CD4-positive, alpha-beta T cell (primary cell): ENCODE measurements at regions of chr15 and their contacts with region 1.

Region 1: DNA sequence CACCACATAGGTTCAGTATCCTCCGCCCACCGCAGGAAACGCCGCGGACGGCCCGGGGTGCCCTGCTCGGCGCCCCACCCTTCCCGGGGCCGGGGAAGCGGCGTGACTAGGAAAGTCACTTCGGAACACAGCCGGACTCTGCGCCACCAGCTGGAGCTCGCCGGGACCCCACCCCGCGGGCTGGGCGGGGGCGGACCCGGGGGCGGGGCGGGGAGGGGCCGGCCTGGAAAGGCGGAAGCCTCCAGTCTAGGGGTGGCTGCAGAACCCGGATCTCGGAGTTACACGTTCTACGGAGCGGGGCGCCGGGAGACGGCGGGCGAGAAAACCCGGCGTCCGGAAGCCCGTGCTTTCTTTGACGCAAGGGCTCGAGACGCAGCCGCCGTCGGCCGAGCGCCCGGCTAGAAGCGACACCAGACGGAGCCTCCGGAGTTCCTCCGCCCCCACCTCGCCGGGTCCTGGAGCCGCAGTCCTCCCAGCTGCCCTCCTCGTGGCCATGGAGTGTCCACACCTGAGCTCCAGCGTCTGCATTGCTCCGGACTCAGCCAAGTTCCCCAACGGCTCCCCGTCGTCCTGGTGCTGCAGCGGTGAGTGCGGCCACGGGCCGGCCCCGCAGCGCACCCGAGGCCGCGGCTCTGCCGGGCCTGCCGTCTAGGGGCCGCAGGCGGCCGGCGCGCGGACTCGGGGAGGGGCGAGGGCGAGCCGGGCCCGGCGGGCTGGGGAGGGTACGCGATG is at the start of gene USP3:
- DNase-seq: peak; percentile 88 to 96 (median 93)
- ATAC-seq: peak; percentile 67
- H3K4me3 ChIP-seq: peak within 1 kb of the TSS; percentile 93
- H3K4me3 Mint-ChIP-seq: peak within 1 kb of the TSS; percentile 96
- H3K27ac ChIP-seq: peak within 1 kb of the TSS; percentile 97 to 99
- H3K27ac Mint-ChIP-seq: peak within 1 kb of the TSS; percentile 92
- H3K4me1 ChIP-seq: peaks cover 58% of the 10 kb centered on the region
- H3K4me1 Mint-ChIP-seq: peaks cover 77% of the 10 kb centered on the region
- H3K27me3 ChIP-seq: no peaks in the 10 kb centered on the region
- H3K27me3 Mint-ChIP-seq: no peaks in the 10 kb centered on the region
- CTCF ChIP-seq: peak; percentile 36
- total RNA-seq, gene USP3: 280 to 282 TPM

Region 2: DNA sequence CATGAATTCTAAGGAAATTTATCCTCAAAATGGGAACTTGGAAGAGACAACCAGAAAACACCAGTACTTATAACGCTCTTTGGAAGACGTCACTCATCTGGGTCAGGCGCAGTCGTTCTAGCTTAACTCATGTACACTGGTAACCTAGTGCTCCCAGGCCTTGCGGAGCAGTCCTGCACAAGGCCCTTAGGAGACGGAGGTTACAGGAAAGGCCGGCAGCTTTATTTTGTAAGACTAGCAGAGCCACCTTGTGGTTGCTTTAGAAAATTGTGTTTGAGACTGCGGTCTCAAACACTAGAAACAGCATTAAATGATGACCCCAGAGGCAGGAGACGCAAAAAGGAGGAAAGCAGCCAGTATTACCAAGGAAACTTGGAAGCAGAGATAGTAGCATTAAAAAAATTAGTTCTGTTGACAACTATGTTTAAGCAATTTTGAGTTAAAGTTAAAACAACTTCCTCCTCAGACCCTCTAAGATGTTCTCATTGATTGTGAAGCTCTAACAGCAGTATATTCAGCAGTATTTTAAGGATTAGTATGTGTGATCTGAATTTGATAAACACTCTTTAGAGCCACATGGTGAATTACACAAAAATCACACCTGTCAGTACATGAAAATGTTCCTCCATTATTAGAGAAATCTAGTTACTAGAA is 1197.4 kb before region 1 on chr15:
- CTCF ChIA-PET with region 1: no interaction called
- POLR2A ChIA-PET with region 1: no interaction called
- intact Hi-C with region 1: no loop called
- DNase-seq: peak in 2 of 14 experiments; percentile 1
- ATAC-seq: no peak
- H3K4me3 ChIP-seq: no peak overlapping the region
- H3K4me3 Mint-ChIP-seq: no peak overlapping the region
- H3K27ac ChIP-seq: no peak overlapping the region
- H3K27ac Mint-ChIP-seq: no peak overlapping the region
- H3K4me1 ChIP-seq: no peaks in the 10 kb centered on the region
- H3K4me1 Mint-ChIP-seq: no peaks in the 10 kb centered on the region
- H3K27me3 ChIP-seq: peaks cover 5 to 10% of the 10 kb centered on the region in 2 experiments
- H3K27me3 Mint-ChIP-seq: peaks cover 40% of the 10 kb centered on the region
- CTCF ChIP-seq: peak; percentile 48

Region 3: DNA sequence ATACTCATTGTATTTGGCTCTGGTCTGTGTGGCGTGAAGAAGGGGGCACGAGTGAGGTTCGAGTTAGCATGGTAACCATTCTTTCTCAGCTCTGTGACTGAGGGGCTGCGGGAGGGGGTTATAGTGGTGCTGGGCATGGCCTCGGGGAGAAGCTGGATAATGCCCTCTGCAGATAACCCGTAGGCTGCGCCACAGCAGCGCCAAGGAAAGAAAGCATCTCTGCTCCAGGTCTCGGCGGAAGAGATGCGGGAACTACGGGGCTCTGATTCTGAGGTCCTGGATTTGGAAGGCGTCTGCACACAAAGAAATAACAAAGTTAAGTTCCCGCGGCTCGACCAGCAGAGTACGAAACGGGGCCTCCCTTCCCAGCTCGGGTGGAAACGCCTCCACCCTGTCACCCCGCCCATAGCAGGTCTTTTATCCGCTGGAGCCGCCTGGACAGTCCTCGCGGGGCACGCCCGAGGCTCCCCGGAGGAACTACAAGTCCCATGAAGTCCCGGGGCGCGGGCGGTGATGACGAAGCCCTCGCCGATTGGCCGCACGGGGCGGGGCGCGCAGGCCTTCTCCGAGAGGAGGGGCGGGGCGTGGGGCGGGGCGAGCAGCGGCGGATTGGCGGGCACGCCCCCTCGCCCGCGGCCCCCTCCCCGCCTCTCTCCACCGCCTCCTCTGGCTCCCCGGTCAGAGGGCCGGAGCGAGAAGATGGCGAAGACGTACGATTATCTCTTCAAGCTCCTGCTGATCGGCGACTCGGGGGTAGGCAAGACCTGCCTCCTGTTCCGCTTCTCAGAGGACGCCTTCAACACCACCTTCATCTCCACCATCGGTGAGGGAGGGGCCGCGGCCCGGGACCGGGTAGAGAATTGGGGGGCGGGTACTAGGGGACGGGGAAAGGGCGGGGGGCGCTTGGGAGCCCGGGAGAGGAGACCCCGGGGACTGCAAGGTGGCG is 315.2 kb before region 1 on chr15 and contains the start of gene RAB8B:
- CTCF ChIA-PET with region 1: no interaction called
- POLR2A ChIA-PET with region 1: interaction called, 6 read pairs
- intact Hi-C with region 1: loop called in 1 of 2 experiments (anchors 10 kb)
- DNase-seq: peak; percentile 94 to 99 (median 97)
- ATAC-seq: peak; percentile 69
- H3K4me3 ChIP-seq: peak within 1 kb of the TSS; percentile 88
- H3K4me3 Mint-ChIP-seq: peak within 1 kb of the TSS; percentile 96
- H3K27ac ChIP-seq: peak within 1 kb of the TSS; percentile 94 to 95
- H3K27ac Mint-ChIP-seq: peak within 1 kb of the TSS; percentile 95
- H3K4me1 ChIP-seq: peaks cover 28% of the 10 kb centered on the region
- H3K4me1 Mint-ChIP-seq: peaks cover 54% of the 10 kb centered on the region
- H3K27me3 ChIP-seq: no peaks in the 10 kb centered on the region
- H3K27me3 Mint-ChIP-seq: no peaks in the 10 kb centered on the region
- CTCF ChIP-seq: no peak
- total RNA-seq, gene RAB8B: 74.5 to 75.2 TPM

Region 4: GRCh38 chr15:63481105-63481810 is 23.2 kb before region 1 on chr15:
- CTCF ChIA-PET with region 1: interaction called, 24 read pairs
- POLR2A ChIA-PET with region 1: interaction called, 367 read pairs
- intact Hi-C with region 1: loop called (anchors 1 kb)
- DNase-seq: peak in 2 of 14 experiments; percentile 61 to 69
- ATAC-seq: no peak
- H3K4me3 ChIP-seq: no peak overlapping the region
- H3K4me3 Mint-ChIP-seq: peak overlapping the region; percentile 26
- H3K27ac ChIP-seq: peak overlapping the region; percentile 71 to 91
- H3K27ac Mint-ChIP-seq: peak overlapping the region; percentile 95
- H3K4me1 ChIP-seq: peaks cover 89% of the 10 kb centered on the region
- H3K4me1 Mint-ChIP-seq: peaks cover 81% of the 10 kb centered on the region
- H3K27me3 ChIP-seq: no peaks in the 10 kb centered on the region
- H3K27me3 Mint-ChIP-seq: no peaks in the 10 kb centered on the region
- CTCF ChIP-seq: no peak

Region 5: DNA sequence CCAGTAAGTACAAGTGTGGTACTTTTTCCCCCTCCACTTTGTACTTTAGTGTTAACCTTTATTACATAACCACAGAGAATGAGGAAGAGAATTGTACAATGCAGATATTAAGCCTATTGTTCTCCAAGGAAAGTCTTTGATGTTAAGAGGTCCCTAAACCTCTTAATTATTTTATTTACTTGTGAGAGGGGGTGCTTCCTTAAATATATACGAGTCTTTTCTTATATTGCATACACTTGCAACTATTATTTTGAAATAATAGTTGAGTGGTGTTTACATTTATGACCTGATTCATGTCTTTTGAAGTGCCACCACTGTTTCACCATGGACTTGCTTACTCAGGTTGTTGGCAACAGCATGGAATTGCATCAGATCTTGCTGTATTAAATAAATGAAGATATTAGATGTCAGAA is 10.1 kb after region 1 on chr15:
- CTCF ChIA-PET with region 1: interaction called, 18 read pairs
- POLR2A ChIA-PET with region 1: interaction called, 32 read pairs
- intact Hi-C with region 1: no loop called
- DNase-seq: peak in 1 of 14 experiments; percentile 52
- ATAC-seq: peak; percentile 19
- H3K4me3 ChIP-seq: no peak overlapping the region
- H3K4me3 Mint-ChIP-seq: peak overlapping the region; percentile 44
- H3K27ac ChIP-seq: peak overlapping the region in 1 of 2 donors; percentile 10
- H3K27ac Mint-ChIP-seq: peak overlapping the region; percentile 48
- H3K4me1 ChIP-seq: peaks cover 40% of the 10 kb centered on the region
- H3K4me1 Mint-ChIP-seq: peaks cover 99% of the 10 kb centered on the region
- H3K27me3 ChIP-seq: no peaks in the 10 kb centered on the region
- H3K27me3 Mint-ChIP-seq: no peaks in the 10 kb centered on the region
- CTCF ChIP-seq: no peak

Region 6: DNA sequence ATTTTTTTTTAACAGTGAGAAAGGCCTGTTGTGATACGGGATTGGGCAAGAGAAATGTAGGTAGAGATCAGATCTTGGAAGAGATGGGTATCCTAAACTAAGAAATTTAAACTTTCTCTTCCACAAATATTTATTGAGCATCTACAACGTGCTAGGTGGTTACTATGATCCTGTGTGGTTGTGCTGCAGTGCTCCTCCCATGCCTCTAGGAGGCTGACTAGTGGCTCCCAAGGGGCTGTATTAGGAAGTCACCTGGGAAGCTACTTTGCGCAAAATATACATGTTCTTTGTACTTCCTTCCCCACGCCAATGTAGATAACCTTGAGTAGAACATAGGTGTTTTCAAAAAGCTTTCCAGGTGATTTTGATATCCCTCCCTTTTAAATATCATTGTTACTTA is 27.2 kb after region 1 on chr15:
- CTCF ChIA-PET with region 1: interaction called, 4 read pairs
- POLR2A ChIA-PET with region 1: interaction called, 23 read pairs
- intact Hi-C with region 1: no loop called
- DNase-seq: peak in 2 of 14 experiments; percentile 28 to 38
- ATAC-seq: peak; percentile 51
- H3K4me3 ChIP-seq: no peak overlapping the region
- H3K4me3 Mint-ChIP-seq: peak overlapping the region; percentile 2
- H3K27ac ChIP-seq: no peak overlapping the region
- H3K27ac Mint-ChIP-seq: no peak overlapping the region
- H3K4me1 ChIP-seq: peaks cover 35% of the 10 kb centered on the region
- H3K4me1 Mint-ChIP-seq: peaks cover 92% of the 10 kb centered on the region
- H3K27me3 ChIP-seq: no peaks in the 10 kb centered on the region
- H3K27me3 Mint-ChIP-seq: no peaks in the 10 kb centered on the region
- CTCF ChIP-seq: peak; percentile 21

Region 7: GRCh38 chr15:63553388-63553791 is 49.0 kb after region 1 on chr15:
- CTCF ChIA-PET with region 1: interaction called, 3 read pairs
- POLR2A ChIA-PET with region 1: interaction called, 21 read pairs
- intact Hi-C with region 1: loop called in 1 of 2 experiments (anchors 5 kb)
- DNase-seq: peak in 1 of 14 experiments; percentile 27
- ATAC-seq: peak; percentile 51
- H3K4me3 ChIP-seq: no peak overlapping the region
- H3K4me3 Mint-ChIP-seq: no peak overlapping the region
- H3K27ac ChIP-seq: no peak overlapping the region
- H3K27ac Mint-ChIP-seq: peak overlapping the region; percentile 67
- H3K4me1 ChIP-seq: no peaks in the 10 kb centered on the region
- H3K4me1 Mint-ChIP-seq: peaks cover 68% of the 10 kb centered on the region
- H3K27me3 ChIP-seq: no peaks in the 10 kb centered on the region
- H3K27me3 Mint-ChIP-seq: no peaks in the 10 kb centered on the region
- CTCF ChIP-seq: no peak

Region 8: GRCh38 chr15:64093627-64094417 is 589.4 kb after region 1 on chr15 and contains the start of gene CIAO2A:
- CTCF ChIA-PET with region 1: no interaction called
- POLR2A ChIA-PET with region 1: interaction called, 9 read pairs
- intact Hi-C with region 1: loop called in 1 of 2 experiments (anchors 10 kb)
- DNase-seq: peak; percentile 79 to 97 (median 87)
- ATAC-seq: peak; percentile 71
- H3K4me3 ChIP-seq: peak within 1 kb of the TSS; percentile 73
- H3K4me3 Mint-ChIP-seq: peak within 1 kb of the TSS; percentile 94
- H3K27ac ChIP-seq: peak within 1 kb of the TSS; percentile 71 to 90
- H3K27ac Mint-ChIP-seq: peak within 1 kb of the TSS; percentile 93
- H3K4me1 ChIP-seq: peaks cover 61% of the 10 kb centered on the region
- H3K4me1 Mint-ChIP-seq: peaks cover 79% of the 10 kb centered on the region
- H3K27me3 ChIP-seq: no peaks in the 10 kb centered on the region
- H3K27me3 Mint-ChIP-seq: no peaks in the 10 kb centered on the region
- CTCF ChIP-seq: no peak
- total RNA-seq, gene CIAO2A: 10.9 to 12.2 TPM